Posterior vena cava (tissue), 2 donors: ENCODE measurements at regions of chr9 and their contacts with region 1.

Region 1: GRCh38 chr9:115204904-115205453 is 87.0 kb upstream of the TNC start:
- DNase-seq: no peak

Region 2: DNA sequence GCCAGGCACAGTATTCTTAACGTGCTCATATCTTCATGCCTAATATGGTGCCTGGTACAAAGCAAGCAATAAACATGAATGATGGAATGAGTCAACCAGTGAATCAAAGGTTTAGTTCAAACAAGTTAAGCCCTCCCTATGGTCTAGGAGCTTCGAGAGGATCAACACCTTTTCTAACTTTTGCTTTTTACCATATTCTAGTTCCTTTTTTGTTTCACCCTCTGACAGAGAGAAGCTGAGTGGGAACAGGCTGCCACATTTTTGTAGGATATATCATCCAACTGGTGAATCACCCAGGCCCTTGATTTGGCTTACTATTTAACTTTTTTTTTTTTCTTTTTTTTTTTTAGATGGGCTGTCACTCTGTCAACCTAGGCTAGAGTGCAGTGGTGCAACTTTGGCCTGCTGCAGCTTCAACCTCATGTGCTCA is 47.7 kb before region 1 on chr9:
- intact Hi-C with region 1: loop called in 1 of 2 experiments (anchors 5 kb)
- DNase-seq: no peak

Region 3: DNA sequence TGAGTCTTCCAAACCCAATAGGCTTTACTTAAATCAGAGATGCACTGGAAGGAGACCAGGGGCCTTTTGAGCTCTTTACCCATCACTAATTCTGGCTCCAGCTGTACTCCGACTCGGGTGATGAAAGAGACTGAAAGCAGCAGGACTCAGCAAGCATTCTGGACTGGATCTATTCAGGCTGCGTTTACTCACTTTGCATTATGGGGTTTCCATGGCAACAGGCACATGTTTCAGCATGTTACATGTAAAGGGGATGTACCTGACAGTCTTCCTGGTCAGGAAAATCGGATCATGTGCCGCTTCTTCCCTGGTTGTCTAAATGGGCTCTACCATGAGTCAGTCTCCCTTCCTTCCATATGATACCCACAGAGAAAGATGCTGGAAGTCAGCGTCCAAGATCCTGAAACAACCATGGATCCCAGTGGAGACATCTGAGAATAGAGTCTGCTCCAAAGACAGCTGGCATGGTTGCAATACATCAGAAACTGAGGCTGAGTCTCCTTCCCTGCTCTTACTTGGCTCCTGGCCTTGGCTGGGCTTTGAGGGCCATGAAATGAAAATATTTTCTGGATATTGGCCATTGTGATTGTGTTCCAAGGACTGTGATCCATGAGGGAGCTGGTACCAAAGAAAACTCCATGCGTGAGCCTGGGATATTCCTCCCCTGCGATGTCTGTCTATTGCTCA is 15.5 kb after region 1 on chr9:
- intact Hi-C with region 1: no loop called
- DNase-seq: no peak

Region 4: GRCh38 chr9:115575147-115575546 is 370.2 kb after region 1 on chr9:
- intact Hi-C with region 1: no loop called
- DNase-seq: no peak